Caco-2 (cell line): ENCODE measurements at regions of chr17 and their contacts with region 1.

Region 1: GRCh38 chr17:81101614-81102306 is 63.5 kb upstream of the PVALEF start:
- DNase-seq: peak; percentile 88 to 94
- H3K4me3 ChIP-seq: no peak overlapping the region
- H3K4me3 Mint-ChIP-seq: no peak overlapping the region
- H3K27ac Mint-ChIP-seq: peak overlapping the region; percentile 59
- H3K4me1 ChIP-seq: no peaks in the 10 kb centered on the region; the same call in 1 of the 2 replicates
- H3K4me1 Mint-ChIP-seq: no peaks in the 10 kb centered on the region
- H3K27me3 ChIP-seq: no peaks in the 10 kb centered on the region
- H3K27me3 Mint-ChIP-seq: no peaks in the 10 kb centered on the region
- CTCF ChIP-seq: peak; percentile 99 to 100

Region 2: GRCh38 chr17:80987941-80988461 is 113.8 kb before region 1 on chr17:
- CTCF ChIA-PET with region 1: interaction called, 3 read pairs
- POLR2A ChIA-PET with region 1: no interaction called
- intact Hi-C with region 1: loop called (anchors 2 kb)
- DNase-seq: no peak
- H3K4me3 ChIP-seq: no peak overlapping the region
- H3K4me3 Mint-ChIP-seq: no peak overlapping the region
- H3K27ac Mint-ChIP-seq: no peak overlapping the region
- H3K4me1 ChIP-seq: peaks cover 13% of the 10 kb centered on the region
- H3K4me1 Mint-ChIP-seq: no peaks in the 10 kb centered on the region
- H3K27me3 ChIP-seq: no peaks in the 10 kb centered on the region
- H3K27me3 Mint-ChIP-seq: no peaks in the 10 kb centered on the region
- CTCF ChIP-seq: no peak